Heart right ventricle (tissue), 16 donors: ENCODE measurements at regions of chr2 and their contacts with region 1.

Region 1: DNA sequence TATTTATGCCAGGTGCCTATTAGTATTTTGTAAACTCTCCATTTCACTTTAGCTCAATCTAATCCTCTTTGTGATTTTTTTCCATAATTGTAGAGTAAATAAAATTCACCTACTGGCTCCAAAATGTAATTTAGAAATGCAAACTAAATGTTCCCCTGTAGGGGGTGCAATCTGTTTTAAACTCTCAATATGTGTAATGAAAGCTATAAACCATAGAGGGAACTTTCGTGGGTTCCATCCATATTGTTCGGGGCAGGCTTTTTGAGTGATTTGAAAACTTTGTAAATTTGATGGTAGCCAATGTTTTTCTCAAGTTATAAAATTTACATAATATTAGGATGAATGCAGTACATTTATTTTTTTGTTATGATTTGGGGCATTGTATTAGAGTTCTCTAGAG is 49.4 kb downstream of the TSPYL6 start:
- DNase-seq: no peak
- ATAC-seq: peak in 4 of 8 donors; percentile 34 to 66 (median 42)
- H3K4me3 ChIP-seq: no peak overlapping the region
- H3K27ac ChIP-seq: peak overlapping the region in 1 of 10 donors; percentile 84
- H3K4me1 ChIP-seq: peaks cover 2 to 36% (median 33%) of the 10 kb centered on the region in 9 donors
- H3K27me3 ChIP-seq: no peaks in the 10 kb centered on the region
- CTCF ChIP-seq: peak; percentile 50 to 87 (median 71)

Region 2: GRCh38 chr2:54015798-54016699 is 190.5 kb before region 1 on chr2:
- intact Hi-C with region 1: no loop called
- DNase-seq: no peak
- ATAC-seq: peak in 6 of 8 donors; percentile 47 to 66 (median 61)
- H3K4me3 ChIP-seq: no peak overlapping the region
- H3K27ac ChIP-seq: peak overlapping the region in 3 of 10 donors; percentile 21 to 41 (median 29)
- H3K4me1 ChIP-seq: peaks cover 0 to 9% (median 7%) of the 10 kb centered on the region in 9 donors
- H3K27me3 ChIP-seq: no peaks in the 10 kb centered on the region
- CTCF ChIP-seq: no peak

Region 3: DNA sequence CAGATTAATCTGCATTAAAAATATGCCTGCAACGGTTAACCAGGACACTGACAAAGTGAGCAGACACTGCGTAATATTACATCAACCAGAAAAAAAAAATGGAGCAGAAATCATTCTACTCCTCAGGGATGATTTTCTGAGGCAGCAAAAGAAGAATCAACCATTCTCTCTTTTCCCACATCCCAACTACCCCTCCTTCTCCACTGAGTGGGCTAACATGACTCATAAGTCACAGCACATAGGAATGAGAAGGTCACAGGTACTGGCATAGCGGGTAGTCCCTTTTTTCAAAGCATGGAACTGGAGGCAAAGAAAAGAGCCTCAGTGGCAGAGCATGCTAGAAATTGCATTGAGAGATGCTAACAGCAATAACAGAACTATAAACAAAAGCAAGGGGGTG is 103.7 kb after region 1 on chr2:
- intact Hi-C with region 1: loop called in 1 of 10 experiments (anchors 10 kb)
- DNase-seq: no peak
- ATAC-seq: peak in 3 of 8 donors; percentile 56 to 64 (median 58)
- H3K4me3 ChIP-seq: no peak overlapping the region
- H3K27ac ChIP-seq: no peak overlapping the region
- H3K4me1 ChIP-seq: peaks cover 0 to 7% (median 0%) of the 10 kb centered on the region in 9 donors
- H3K27me3 ChIP-seq: no peaks in the 10 kb centered on the region
- CTCF ChIP-seq: no peak

Region 4: GRCh38 chr2:54330162-54330925 is 123.7 kb after region 1 on chr2:
- intact Hi-C with region 1: loop called in 6 of 10 experiments (anchors 2 to 10 kb)
- DNase-seq: peak; percentile 98
- ATAC-seq: peak; percentile 98 to 99 (median 99)
- H3K4me3 ChIP-seq: peak overlapping the region; percentile 9 to 74 (median 62)
- H3K27ac ChIP-seq: peak overlapping the region; percentile 75 to 97 (median 92)
- H3K4me1 ChIP-seq: peaks cover 2 to 26% (median 19%) of the 10 kb centered on the region in 9 donors
- H3K27me3 ChIP-seq: peaks cover 0 to 7% (median 0%) of the 10 kb centered on the region in 7 donors
- CTCF ChIP-seq: no peak

Region 5: GRCh38 chr2:54348646-54349045 is 142.1 kb after region 1 on chr2:
- intact Hi-C with region 1: no loop called
- DNase-seq: peak in 1 of 2 donors; percentile 70
- ATAC-seq: peak; percentile 52 to 94 (median 84)
- H3K4me3 ChIP-seq: no peak overlapping the region
- H3K27ac ChIP-seq: peak overlapping the region in 5 of 10 donors; percentile 41 to 58 (median 49)
- H3K4me1 ChIP-seq: peaks cover 0 to 19% (median 0%) of the 10 kb centered on the region in 9 donors
- H3K27me3 ChIP-seq: no peaks in the 10 kb centered on the region
- CTCF ChIP-seq: no peak

Region 6: DNA sequence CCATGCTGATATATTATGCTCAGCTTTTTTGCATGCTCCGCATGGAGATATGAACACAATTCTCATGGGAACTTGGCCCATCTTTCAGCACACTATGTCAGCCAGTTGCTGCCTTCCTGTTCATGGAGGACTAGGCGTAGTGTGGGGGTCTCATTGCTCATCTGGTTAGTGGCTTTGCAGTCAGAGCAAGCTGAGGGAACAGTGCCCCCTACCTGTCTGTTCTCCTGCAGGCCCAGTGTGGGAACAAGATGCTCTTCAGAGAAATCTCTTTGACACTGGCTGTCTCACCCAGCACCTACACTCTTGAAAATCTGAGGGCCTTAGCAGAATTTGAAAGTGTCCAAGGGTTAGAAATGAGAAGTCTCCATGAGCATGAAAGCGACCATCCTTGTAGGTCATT is 296.6 kb after region 1 on chr2:
- intact Hi-C with region 1: loop called in 4 of 10 experiments (anchors 10 kb)
- DNase-seq: no peak
- ATAC-seq: peak in 4 of 8 donors; percentile 20 to 57 (median 23)
- H3K4me3 ChIP-seq: no peak overlapping the region
- H3K27ac ChIP-seq: peak overlapping the region in 3 of 10 donors; percentile 14 to 72 (median 24)
- H3K4me1 ChIP-seq: peaks cover 49 to 100% (median 99%) of the 10 kb centered on the region in 9 donors
- H3K27me3 ChIP-seq: no peaks in the 10 kb centered on the region
- CTCF ChIP-seq: peak in 8 of 9 donors; percentile 23 to 65 (median 48)

Region 7: GRCh38 chr2:54680397-54681041 is 473.9 kb after region 1 on chr2:
- intact Hi-C with region 1: loop called in 1 of 10 experiments (anchors 10 kb)
- DNase-seq: no peak
- ATAC-seq: peak in 7 of 8 donors; percentile 24 to 80 (median 52)
- H3K4me3 ChIP-seq: no peak overlapping the region
- H3K27ac ChIP-seq: no peak overlapping the region
- H3K4me1 ChIP-seq: peaks cover 0 to 25% (median 18%) of the 10 kb centered on the region in 9 donors
- H3K27me3 ChIP-seq: no peaks in the 10 kb centered on the region
- CTCF ChIP-seq: no peak